Activated CD4-positive, alpha-beta T cell treated with anti-CD3 and anti-CD28 coated beads, Interleukin-2, amount 10 ng/mL, durations not matched to agents 24 days and 14 days (primary cell): ENCODE measurements at regions of chrX and their contacts with region 1.

Region 1: GRCh38 chrX:129726307-129727111 is 12.3 kb upstream of the XPNPEP2 start:
- DNase-seq: peak; percentile 73
- H3K4me3 Mint-ChIP-seq: no peak overlapping the region
- H3K27ac Mint-ChIP-seq: no peak overlapping the region
- H3K4me1 Mint-ChIP-seq: peaks cover 34% of the 10 kb centered on the region
- H3K27me3 Mint-ChIP-seq: no peaks in the 10 kb centered on the region

Region 2: GRCh38 chrX:129606918-129607317 is 119.6 kb before region 1 on chrX:
- intact Hi-C with region 1: loop called (anchors 1 kb)
- DNase-seq: peak; percentile 85
- H3K4me3 Mint-ChIP-seq: no peak overlapping the region
- H3K27ac Mint-ChIP-seq: no peak overlapping the region
- H3K4me1 Mint-ChIP-seq: peaks cover 17% of the 10 kb centered on the region
- H3K27me3 Mint-ChIP-seq: no peaks in the 10 kb centered on the region

Region 3: DNA sequence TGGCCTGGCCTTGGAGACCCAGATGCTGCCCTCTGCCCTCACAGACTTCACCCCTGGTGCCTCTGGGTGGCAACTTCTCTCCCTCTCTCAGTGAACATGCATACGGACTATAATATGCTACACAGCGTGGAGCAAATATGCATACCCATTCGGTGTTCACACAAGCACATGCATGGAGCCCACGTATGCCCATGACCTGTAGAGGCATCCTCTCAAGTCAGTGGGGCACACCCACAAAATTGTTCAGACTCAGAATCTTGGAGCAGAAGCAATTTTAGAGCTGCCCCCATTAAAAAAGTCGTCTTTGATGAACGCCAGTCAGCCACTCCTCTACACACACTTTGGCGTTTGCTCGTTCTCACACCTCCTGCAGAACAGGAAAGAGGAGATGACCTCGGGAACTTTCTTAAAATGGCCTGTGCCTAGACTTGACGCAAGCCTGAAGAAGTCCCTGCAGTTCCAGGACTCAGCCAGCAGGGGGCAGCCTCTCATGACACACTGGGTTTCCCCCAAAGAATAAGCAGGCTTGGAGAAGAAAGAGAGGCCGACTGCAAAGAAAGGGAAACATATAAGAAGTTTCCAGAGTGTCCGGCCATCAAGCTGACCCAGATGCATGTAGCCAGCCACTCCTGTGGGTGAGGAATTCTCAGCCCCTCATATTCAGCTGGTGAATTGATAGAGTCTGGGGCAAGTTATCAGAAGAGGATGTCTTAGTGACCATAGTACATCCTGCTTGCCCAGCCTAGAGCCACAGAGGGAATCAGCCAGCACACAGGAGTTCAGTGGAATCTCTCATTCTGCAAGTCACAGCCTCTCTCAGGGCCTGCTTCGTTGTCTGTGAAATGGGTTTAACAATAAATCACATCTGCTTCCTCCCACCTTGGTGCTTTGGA is 89.0 kb before region 1 on chrX:
- intact Hi-C with region 1: loop called (anchors 2 kb)
- DNase-seq: peak; percentile 90
- H3K4me3 Mint-ChIP-seq: no peak overlapping the region
- H3K27ac Mint-ChIP-seq: no peak overlapping the region
- H3K4me1 Mint-ChIP-seq: peaks cover 5% of the 10 kb centered on the region
- H3K27me3 Mint-ChIP-seq: no peaks in the 10 kb centered on the region

Region 4: GRCh38 chrX:130702867-130703707 is 976.6 kb after region 1 on chrX:
- intact Hi-C with region 1: no loop called
- DNase-seq: no peak
- H3K4me3 Mint-ChIP-seq: no peak overlapping the region
- H3K27ac Mint-ChIP-seq: no peak overlapping the region
- H3K4me1 Mint-ChIP-seq: no peaks in the 10 kb centered on the region
- H3K27me3 Mint-ChIP-seq: no peaks in the 10 kb centered on the region